ENCODE measurements at regions of chr15 and their contacts with region 1.

Region 1: DNA sequence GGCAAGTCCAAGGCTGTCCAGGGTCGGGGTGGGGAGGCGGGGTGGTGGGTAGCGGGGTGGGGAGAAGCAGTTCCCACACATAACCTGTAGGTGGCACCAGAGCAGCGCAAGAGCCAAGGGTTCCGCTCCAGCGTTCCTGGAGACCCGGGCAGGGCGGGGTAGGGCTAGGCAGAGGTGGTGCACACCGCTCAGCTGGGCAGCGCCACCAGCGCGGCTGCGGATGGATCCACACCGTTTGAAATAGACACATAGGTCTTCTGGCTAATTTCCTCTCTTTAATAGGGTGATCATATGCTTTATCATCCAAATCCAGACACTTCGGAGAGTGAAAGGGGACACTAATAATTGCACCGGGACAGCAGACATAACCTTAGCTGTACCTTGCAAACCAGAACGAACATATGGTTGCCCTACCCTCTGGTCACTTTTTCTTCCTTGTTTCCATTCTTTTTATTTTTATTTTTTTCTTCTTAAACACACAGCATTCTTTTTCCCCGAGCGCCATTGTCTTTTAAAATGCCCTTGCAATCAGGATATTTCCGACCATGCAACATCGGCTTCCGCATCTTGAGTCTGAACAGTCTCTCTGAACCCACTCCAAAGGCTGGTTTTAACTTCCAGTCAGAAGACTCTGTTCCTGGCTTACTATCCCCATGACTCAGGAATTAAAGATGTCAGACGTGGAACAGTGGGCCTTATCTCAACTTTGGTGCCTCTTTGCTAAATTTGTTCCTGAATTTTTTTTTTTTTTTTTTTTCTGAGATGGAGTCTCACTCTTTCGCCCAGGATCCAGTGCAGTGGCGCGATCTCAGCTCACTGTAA is 12.5 kb upstream of the ZSCAN2 start:
- DNase-seq: peak; percentile 71
- H3K4me3 ChIP-seq: peak overlapping the region in 2 of 3 experiments; percentile 25 to 33
- H3K27ac ChIP-seq: no peak overlapping the region
- H3K4me1 ChIP-seq: peaks cover 13% of the 10 kb centered on the region
- H3K27me3 ChIP-seq: no peaks in the 10 kb centered on the region
- CTCF ChIP-seq: peak; percentile 36 to 81

Region 2: GRCh38 chr15:84552896-84553295 is 35.4 kb before region 1 on chr15:
- CTCF ChIA-PET with region 1: no interaction called
- dilution Hi-C with region 1: no loop called
- in situ Hi-C with region 1: no loop called
- intact Hi-C with region 1: no loop called
- DNase-seq: no peak
- H3K4me3 ChIP-seq: no peak overlapping the region
- H3K27ac ChIP-seq: no peak overlapping the region
- H3K4me1 ChIP-seq: no peaks in the 10 kb centered on the region
- H3K27me3 ChIP-seq: no peaks in the 10 kb centered on the region
- CTCF ChIP-seq: no peak

Region 3: GRCh38 chr15:84658080-84658787 is 70.0 kb after region 1 on chr15 and contains the start of gene NMB:
- CTCF ChIA-PET with region 1: interaction called, 4 read pairs
- dilution Hi-C with region 1: no loop called
- in situ Hi-C with region 1: no loop called
- intact Hi-C with region 1: loop called (anchors 1 kb)
- DNase-seq: peak; percentile 54
- H3K4me3 ChIP-seq: peak within 1 kb of the TSS; percentile 40 to 57 (median 56)
- H3K27ac ChIP-seq: peak within 1 kb of the TSS; percentile 30
- H3K4me1 ChIP-seq: peaks cover 16% of the 10 kb centered on the region
- H3K27me3 ChIP-seq: no peaks in the 10 kb centered on the region
- CTCF ChIP-seq: peak; percentile 30 to 75
- total RNA-seq, gene NMB: 1.0 to 3.7 TPM

Region 4: GRCh38 chr15:84883916-84884768 is 295.9 kb after region 1 on chr15 and contains the start of gene SLC28A1:
- CTCF ChIA-PET with region 1: no interaction called
- dilution Hi-C with region 1: no loop called
- in situ Hi-C with region 1: loop called (anchors 10 to 25 kb)
- intact Hi-C with region 1: no loop called
- DNase-seq: no peak
- H3K4me3 ChIP-seq: no peak within 1 kb of the TSS
- H3K27ac ChIP-seq: no peak within 1 kb of the TSS
- H3K4me1 ChIP-seq: no peaks in the 10 kb centered on the region
- H3K27me3 ChIP-seq: no peaks in the 10 kb centered on the region
- CTCF ChIP-seq: no peak
- total RNA-seq, gene SLC28A1: 0.17 TPM in 1 of 2 donors, not detected in the other

Region 5: GRCh38 chr15:85044251-85044853 is 456.1 kb after region 1 on chr15:
- CTCF ChIA-PET with region 1: interaction called, 3 read pairs
- dilution Hi-C with region 1: no loop called
- in situ Hi-C with region 1: no loop called
- intact Hi-C with region 1: loop called (anchors 1 kb)
- DNase-seq: peak; percentile 40
- H3K4me3 ChIP-seq: no peak overlapping the region
- H3K27ac ChIP-seq: no peak overlapping the region
- H3K4me1 ChIP-seq: no peaks in the 10 kb centered on the region
- H3K27me3 ChIP-seq: no peaks in the 10 kb centered on the region
- CTCF ChIP-seq: peak; percentile 67 to 76

Region 6: GRCh38 chr15:85168642-85169173 is 580.4 kb after region 1 on chr15:
- CTCF ChIA-PET with region 1: no interaction called
- dilution Hi-C with region 1: no loop called
- in situ Hi-C with region 1: no loop called
- intact Hi-C with region 1: loop called (anchors 5 kb)
- DNase-seq: peak; percentile 71
- H3K4me3 ChIP-seq: peak overlapping the region; percentile 28 to 54 (median 51)
- H3K27ac ChIP-seq: no peak overlapping the region
- H3K4me1 ChIP-seq: no peaks in the 10 kb centered on the region
- H3K27me3 ChIP-seq: no peaks in the 10 kb centered on the region
- CTCF ChIP-seq: peak; percentile 69 to 74